CD8-positive, alpha-beta T cell (primary cell): ENCODE measurements at regions of chr2 and their contacts with region 1.

Region 1: GRCh38 chr2:63588385-63589147 is at the starts of genes MDH1 and WDPCP:
- DNase-seq: peak; percentile 84 to 99 (median 91)
- ATAC-seq: peak; percentile 83
- H3K4me3 ChIP-seq: peak within 1 kb of the TSS; percentile 83 to 88
- H3K4me3 Mint-ChIP-seq: peak within 1 kb of the TSS; percentile 90
- H3K27ac ChIP-seq: peak within 1 kb of the TSS; percentile 75 to 95
- H3K27ac Mint-ChIP-seq: peak within 1 kb of the TSS; percentile 95
- H3K4me1 ChIP-seq: peaks cover 19% of the 10 kb centered on the region
- H3K4me1 Mint-ChIP-seq: peaks cover 44% of the 10 kb centered on the region
- H3K27me3 ChIP-seq: no peaks in the 10 kb centered on the region
- H3K27me3 Mint-ChIP-seq: no peaks in the 10 kb centered on the region
- CTCF ChIP-seq: no peak
- total RNA-seq, gene MDH1: 87.2 to 94.8 TPM
- total RNA-seq, gene WDPCP: 9.6 to 11.9 TPM

Region 2: DNA sequence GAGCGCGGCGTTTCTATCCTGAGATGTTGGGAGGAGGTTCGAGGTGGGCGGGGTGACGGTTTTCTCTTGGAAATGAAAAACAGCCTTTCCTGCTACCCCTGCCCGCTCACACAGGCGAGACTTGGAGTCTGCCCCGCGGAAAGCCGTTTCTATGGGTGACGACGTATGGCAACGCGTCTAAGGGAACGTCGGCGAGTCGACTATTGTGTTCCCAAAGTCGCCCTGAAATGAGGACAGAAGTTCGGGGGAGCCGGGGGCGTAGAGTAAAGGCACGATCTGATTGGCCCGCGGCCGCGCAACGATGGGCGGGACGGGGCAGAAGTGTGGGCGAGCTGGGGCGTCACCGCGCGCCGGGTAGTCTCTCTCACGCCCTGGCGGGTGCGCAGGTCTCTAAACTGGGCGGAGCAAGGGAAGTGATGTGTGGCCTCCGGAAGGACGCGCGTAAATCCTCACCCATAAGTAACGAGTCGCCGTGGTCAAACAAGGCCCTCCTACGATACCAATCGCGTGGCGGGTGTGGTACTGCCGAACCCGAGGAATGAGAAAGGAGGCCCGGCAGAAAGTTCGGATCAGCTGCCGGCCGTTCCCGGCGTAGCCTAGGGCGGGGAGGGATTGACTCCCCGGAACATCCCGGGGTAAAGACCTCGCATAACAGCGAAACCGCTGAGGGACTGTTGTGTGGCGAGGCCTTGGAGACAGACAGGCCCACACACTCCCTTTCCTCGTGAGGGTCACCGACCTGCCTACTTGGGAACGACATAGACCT is 1824.3 kb before region 1 on chr2:
- CTCF ChIA-PET with region 1: no interaction called
- POLR2A ChIA-PET with region 1: no interaction called
- intact Hi-C with region 1: loop called in 1 of 2 experiments (anchors 10 kb)
- DNase-seq: peak; percentile 91 to 99 (median 94)
- ATAC-seq: peak; percentile 97
- H3K4me3 ChIP-seq: peak overlapping the region; percentile 90 to 91
- H3K4me3 Mint-ChIP-seq: peak overlapping the region; percentile 96
- H3K27ac ChIP-seq: peak overlapping the region; percentile 99 to 100
- H3K27ac Mint-ChIP-seq: peak overlapping the region; percentile 98
- H3K4me1 ChIP-seq: no peaks in the 10 kb centered on the region
- H3K4me1 Mint-ChIP-seq: peaks cover 12% of the 10 kb centered on the region
- H3K27me3 ChIP-seq: no peaks in the 10 kb centered on the region
- H3K27me3 Mint-ChIP-seq: no peaks in the 10 kb centered on the region
- CTCF ChIP-seq: no peak

Region 3: DNA sequence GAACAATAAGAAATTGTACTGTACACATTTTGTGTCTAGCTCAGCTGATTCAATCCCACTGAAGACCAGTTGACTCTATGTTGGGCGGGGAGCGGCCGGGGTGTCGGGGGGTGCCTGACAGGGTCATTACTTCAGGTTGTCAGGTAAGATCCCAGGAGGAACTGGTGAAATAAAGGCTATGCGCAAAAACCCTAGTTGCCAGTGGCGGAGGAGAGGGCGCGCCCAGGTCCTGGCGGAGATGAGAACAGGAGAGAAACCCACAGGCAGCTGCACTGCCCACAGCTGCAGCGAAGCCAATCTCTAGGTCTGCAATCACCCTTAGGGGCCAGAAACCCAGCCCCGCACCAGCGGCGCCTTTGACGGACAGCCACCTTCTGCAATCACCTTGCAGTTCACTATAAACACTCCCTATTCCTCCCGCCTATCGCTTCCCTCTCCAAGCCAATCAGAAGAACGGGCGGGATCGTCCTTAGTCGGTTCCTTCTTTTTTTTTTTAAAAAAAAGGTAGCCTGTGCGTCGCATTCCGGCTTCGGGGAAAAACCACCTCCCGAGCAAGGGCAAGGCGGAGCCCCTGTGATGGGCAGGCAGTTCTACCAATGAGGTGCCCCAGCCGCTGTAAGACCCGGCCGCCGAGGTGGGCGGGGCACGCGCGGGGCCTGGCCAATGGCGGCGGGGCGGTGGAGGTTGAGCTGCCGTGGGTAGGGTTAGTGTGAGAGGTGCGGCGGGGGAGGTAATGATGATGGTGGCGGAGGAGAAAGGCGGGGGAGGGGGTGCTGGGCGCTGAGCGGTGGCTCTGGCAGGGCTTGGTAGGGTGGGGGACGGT is 883.3 kb before region 1 on chr2 and contains the start of gene EHBP1:
- CTCF ChIA-PET with region 1: no interaction called
- POLR2A ChIA-PET with region 1: no interaction called
- intact Hi-C with region 1: loop called in 1 of 2 experiments (anchors 1 kb)
- DNase-seq: peak; percentile 93 to 99 (median 97)
- ATAC-seq: peak; percentile 96
- H3K4me3 ChIP-seq: peak within 1 kb of the TSS; percentile 74 to 77
- H3K4me3 Mint-ChIP-seq: peak within 1 kb of the TSS; percentile 85
- H3K27ac ChIP-seq: peak within 1 kb of the TSS; percentile 36 to 65
- H3K27ac Mint-ChIP-seq: peak within 1 kb of the TSS; percentile 79
- H3K4me1 ChIP-seq: peaks cover 11% of the 10 kb centered on the region
- H3K4me1 Mint-ChIP-seq: peaks cover 41% of the 10 kb centered on the region
- H3K27me3 ChIP-seq: no peaks in the 10 kb centered on the region
- H3K27me3 Mint-ChIP-seq: no peaks in the 10 kb centered on the region
- CTCF ChIP-seq: no peak
- total RNA-seq, gene EHBP1: 16.2 to 16.7 TPM

Region 4: GRCh38 chr2:63665846-63666475 is 77.4 kb after region 1 on chr2:
- CTCF ChIA-PET with region 1: no interaction called
- POLR2A ChIA-PET with region 1: no interaction called
- intact Hi-C with region 1: no loop called
- DNase-seq: no peak
- ATAC-seq: no peak
- H3K4me3 ChIP-seq: no peak overlapping the region
- H3K4me3 Mint-ChIP-seq: no peak overlapping the region
- H3K27ac ChIP-seq: no peak overlapping the region
- H3K27ac Mint-ChIP-seq: no peak overlapping the region
- H3K4me1 ChIP-seq: no peaks in the 10 kb centered on the region
- H3K4me1 Mint-ChIP-seq: no peaks in the 10 kb centered on the region
- H3K27me3 ChIP-seq: no peaks in the 10 kb centered on the region
- H3K27me3 Mint-ChIP-seq: peaks cover 19% of the 10 kb centered on the region
- CTCF ChIP-seq: no peak

Region 5: GRCh38 chr2:63861220-63861822 is 272.8 kb after region 1 on chr2:
- CTCF ChIA-PET with region 1: no interaction called
- POLR2A ChIA-PET with region 1: interaction called, 3 read pairs
- intact Hi-C with region 1: loop called (anchors 2 kb)
- DNase-seq: peak; percentile 29 to 83 (median 66)
- ATAC-seq: peak; percentile 61
- H3K4me3 ChIP-seq: no peak overlapping the region
- H3K4me3 Mint-ChIP-seq: no peak overlapping the region
- H3K27ac ChIP-seq: no peak overlapping the region
- H3K27ac Mint-ChIP-seq: peak overlapping the region; percentile 12
- H3K4me1 ChIP-seq: peaks cover 21% of the 10 kb centered on the region
- H3K4me1 Mint-ChIP-seq: peaks cover 32% of the 10 kb centered on the region
- H3K27me3 ChIP-seq: no peaks in the 10 kb centered on the region
- H3K27me3 Mint-ChIP-seq: no peaks in the 10 kb centered on the region
- CTCF ChIP-seq: peak; percentile 71

Region 6: DNA sequence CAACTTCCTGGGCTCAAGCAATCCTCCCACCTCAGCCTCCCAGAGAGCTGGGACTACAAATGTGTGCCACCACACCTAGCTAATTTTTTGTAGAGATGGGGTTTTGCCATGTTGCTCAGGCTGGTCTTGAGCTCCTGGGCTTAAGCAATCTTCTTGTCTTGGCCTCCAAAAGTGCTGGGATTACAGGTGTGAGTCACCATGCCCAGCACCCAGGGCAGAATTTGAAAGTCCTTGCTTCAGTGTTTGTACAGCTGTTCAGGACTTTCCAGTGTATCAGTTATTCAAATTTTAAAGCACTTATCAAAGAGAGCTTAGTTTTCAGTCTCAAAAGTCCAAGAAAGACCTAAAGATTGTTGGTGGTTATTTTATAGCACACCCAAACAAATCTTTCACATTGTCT is 474.3 kb after region 1 on chr2:
- CTCF ChIA-PET with region 1: no interaction called
- POLR2A ChIA-PET with region 1: no interaction called
- intact Hi-C with region 1: no loop called
- DNase-seq: no peak
- ATAC-seq: no peak
- H3K4me3 ChIP-seq: no peak overlapping the region
- H3K4me3 Mint-ChIP-seq: no peak overlapping the region
- H3K27ac ChIP-seq: no peak overlapping the region
- H3K27ac Mint-ChIP-seq: peak overlapping the region; percentile 29
- H3K4me1 ChIP-seq: peaks cover 15% of the 10 kb centered on the region
- H3K4me1 Mint-ChIP-seq: peaks cover 26% of the 10 kb centered on the region
- H3K27me3 ChIP-seq: no peaks in the 10 kb centered on the region
- H3K27me3 Mint-ChIP-seq: no peaks in the 10 kb centered on the region
- CTCF ChIP-seq: no peak

Region 7: DNA sequence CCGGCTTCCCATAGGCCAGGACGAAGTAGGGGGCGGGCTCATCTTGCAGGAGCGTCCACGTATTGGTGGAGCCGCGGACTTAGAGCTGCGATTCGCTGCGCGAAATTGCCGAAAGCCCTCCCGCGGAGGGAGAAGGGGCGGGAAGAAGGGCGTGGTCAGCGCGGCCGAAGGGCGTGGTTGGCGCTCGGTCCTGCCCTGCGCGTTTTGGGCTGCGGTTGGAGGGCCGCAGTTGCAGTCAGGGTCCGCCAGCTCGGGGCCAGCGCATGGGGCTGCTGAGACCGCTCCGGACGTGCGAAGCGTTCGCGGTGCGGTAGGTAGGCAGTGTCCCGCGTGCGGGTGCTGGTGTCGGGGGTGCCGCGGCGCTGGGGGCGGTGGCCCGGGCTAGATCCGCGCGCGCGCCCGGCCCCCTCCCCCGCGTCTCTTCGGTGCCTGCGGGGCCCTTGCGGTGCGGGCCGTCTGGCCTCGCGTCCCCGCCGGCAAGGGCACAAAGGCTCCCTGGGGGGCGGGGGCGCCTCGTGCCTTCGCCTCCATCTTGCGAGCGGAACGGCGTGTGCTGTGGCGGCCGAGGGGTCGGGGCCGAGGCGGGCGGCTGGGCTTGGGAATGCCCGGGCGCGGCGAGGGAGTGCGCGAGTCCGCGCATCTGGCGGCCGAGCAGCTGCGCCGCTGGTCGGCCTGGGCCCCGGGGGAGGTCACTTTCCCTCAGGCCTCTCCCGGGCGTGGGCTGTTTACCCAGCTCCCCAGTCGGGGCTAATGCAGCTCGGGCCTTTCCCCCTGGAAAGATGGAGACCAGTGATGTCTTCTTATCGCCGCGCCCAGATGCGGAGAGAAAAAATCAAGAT is 1467.9 kb after region 1 on chr2 and contains the start of gene CEP68:
- CTCF ChIA-PET with region 1: no interaction called
- POLR2A ChIA-PET with region 1: no interaction called
- intact Hi-C with region 1: loop called in 1 of 2 experiments (anchors 5 kb)
- DNase-seq: peak; percentile 89 to 98 (median 96)
- ATAC-seq: peak; percentile 89
- H3K4me3 ChIP-seq: peak within 1 kb of the TSS; percentile 85 to 86
- H3K4me3 Mint-ChIP-seq: peak within 1 kb of the TSS; percentile 99
- H3K27ac ChIP-seq: peak within 1 kb of the TSS; percentile 62 to 72
- H3K27ac Mint-ChIP-seq: peak within 1 kb of the TSS; percentile 97
- H3K4me1 ChIP-seq: peaks cover 70% of the 10 kb centered on the region
- H3K4me1 Mint-ChIP-seq: peaks cover 73% of the 10 kb centered on the region
- H3K27me3 ChIP-seq: no peaks in the 10 kb centered on the region
- H3K27me3 Mint-ChIP-seq: no peaks in the 10 kb centered on the region
- CTCF ChIP-seq: no peak
- total RNA-seq, gene CEP68: 19.9 to 20.5 TPM